GM13976 (cell line): ENCODE measurements at regions of chr21 and their contacts with region 1.

Region 1: DNA sequence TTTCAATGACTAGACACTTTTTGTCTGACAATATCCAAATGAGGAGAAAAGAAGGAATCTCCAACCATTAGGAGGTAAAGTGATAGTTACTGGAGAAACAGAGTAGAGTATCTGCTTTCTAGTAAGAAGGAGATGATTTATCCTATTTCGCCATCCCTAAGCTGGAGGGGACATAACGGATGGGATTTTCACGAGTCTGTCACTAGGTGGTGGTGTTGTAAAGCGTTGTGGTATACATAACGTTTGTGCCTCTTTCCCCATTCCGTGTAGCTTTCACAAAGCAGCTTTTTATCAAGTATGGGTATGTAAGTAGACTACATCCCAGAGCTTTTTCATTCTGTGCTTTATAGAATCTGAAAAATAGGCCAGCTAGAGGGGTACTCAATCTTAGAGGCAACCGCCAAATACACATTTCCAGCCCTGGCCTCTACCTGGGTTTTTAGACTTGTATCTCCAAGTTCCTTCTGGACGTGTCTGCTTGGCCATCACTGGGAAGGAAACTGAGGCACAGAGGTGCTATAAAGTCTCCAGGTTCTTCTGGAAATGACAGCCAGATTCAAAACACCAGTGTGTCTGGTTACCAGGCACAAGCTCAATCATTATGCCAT is 33.3 kb upstream of the FAM3B start:
- DNase-seq: peak; percentile 79
- CTCF ChIP-seq: peak; percentile 66

Region 2: GRCh38 chr21:41387042-41387750 is 103.9 kb after region 1 on chr21:
- in situ Hi-C with region 1: no loop called
- DNase-seq: no peak
- CTCF ChIP-seq: no peak

Region 3: DNA sequence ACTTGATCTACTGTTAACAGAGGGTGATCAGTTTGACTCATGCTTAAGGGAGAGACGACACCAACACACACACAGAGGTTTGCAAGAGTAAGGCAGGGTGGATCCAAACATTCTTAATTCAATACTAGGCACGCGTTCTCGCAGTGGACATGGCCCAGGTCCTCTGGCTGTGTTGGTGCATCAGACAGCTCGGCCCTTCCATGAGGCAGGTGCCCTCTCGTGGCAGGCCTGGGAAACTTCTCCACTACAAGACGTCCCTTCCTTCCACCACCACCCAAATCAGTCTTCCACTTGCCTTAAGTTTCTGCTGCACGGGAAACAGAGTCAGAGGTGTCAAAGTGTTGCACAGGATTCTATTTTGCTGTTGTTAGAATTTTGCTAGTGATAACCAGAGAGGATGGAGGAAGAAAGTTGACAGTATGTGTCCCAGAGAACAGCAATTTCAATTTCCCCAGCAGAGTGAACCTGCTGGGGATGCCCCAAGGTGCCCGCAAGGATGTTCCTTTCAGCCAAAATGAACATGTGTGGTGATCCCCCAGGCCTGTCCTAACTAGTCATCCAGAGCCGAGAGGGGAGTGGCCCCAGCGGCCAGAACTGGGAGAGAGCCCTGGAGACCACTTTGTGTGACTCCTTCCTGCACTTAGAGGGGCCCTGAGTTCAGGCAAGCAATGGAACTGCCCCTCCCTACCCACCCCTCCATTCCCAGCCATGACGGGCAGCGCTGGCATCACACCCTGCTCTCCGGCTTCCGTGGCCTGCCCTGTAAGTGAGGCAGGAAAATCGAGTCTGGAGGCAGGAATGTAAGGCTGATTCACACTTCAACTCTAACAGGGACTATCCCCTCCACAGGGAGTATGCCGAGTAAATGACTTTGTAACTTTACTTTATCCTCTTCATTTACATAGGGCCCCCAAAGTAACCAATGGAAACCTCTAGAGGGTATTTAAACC is 177.5 kb after region 1 on chr21:
- in situ Hi-C with region 1: loop called (anchors 25 kb)
- DNase-seq: peak; percentile 83
- CTCF ChIP-seq: peak; percentile 75

Region 4: DNA sequence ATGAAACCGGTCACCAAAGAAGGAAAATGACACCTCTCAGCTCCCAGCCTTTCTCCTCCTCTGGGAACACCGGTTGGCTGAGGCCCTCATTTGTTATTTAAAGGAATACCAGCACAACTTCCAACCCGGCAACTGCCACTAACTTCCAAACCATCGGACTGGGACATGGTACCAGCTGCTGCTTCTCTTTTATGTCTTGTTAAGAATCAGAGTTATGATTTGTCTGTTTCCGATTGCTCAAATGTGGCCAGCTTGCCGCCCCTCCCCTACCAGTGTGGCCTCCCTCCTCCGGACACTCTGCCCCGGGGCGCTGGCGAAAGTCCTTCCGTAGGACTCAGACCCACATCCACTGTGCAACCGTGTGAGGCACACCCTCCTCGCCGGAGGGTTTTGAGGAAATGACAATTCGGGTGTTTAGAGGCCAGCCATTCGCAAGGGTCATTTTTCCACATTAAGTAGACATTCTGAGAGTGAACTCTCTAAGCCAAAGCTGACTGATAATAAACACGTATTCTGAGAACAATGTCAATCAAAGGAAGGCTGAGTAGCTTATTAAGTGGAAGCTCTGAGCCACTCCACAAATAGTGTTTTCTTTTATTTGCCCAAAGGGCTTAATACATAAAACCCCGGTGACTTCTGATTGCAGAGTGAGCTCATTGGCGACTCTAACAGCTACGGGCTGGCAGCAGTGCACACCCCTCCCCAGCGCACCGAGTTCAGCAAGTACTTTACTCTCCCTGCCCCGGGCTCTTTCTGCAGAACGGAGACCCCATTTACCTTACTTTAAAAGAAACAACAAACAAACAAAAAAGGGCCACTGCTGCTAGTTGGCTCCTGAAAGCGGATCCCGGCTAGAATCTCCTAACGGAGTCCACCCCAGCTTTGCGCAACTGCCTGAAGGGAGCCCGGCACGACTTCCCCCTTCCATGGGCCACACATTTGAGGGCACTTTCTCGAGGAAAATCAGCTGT is 478.2 kb after region 1 on chr21:
- in situ Hi-C with region 1: no loop called
- DNase-seq: no peak
- CTCF ChIP-seq: no peak